ENCODE measurements at regions of chr3 and their contacts with region 1.

Region 1: DNA sequence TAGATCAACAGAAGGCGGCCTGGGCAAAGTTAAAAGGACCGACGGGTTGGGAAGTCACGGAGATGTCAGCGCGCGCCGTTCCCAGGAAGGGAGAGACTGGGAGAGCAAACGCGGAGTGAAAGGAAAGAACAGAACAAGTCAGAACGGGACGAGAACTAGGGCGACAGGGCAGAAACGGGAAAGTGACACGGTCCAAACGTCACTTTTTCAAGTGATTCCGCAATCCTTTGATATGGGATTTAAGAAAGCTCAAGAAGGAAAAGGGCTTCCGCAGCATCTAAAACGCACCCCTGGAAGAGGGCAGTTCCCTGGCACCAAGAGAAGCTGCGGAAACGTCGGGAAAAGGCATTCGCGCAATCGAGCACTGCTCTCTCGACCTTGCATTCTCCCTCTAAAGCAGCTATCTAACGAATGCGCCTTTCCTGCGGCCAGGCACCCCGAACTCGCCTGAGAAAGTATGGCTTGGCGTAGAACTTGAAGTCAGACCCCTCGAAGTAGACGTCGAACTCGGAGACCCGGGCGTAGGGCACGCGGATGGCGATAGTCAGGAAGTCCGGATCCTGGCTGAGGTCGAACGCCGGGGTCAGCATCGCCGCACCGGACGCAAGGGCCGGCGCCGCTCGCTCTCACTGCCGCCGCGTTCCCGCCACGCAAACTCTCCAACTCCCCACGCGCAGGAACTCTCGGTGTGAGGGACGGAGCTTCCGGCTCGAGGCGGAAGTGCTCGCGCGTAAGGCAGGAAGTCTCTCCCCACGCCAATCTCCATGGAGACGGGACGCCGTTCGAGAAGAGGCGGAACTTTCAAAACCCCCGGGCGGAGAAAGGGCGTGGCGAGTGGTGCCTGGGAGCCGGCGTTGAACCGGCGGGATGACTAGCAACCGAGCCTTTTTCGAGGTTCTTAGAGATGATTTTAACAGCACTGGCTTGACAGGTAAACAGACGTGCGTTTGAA is at the start of gene SHQ1:
- DNase-seq: peak; percentile 84 to 92
- ATAC-seq: peak; percentile 98
- H3K4me3 ChIP-seq: peak within 1 kb of the TSS; percentile 80
- H3K27ac ChIP-seq: peak within 1 kb of the TSS; percentile 74 to 91
- H3K4me1 ChIP-seq: peaks cover 31% of the 10 kb centered on the region
- CTCF ChIP-seq: no peak
- EP300 ChIP-seq: no peak
- POLR2A ChIP-seq: peak; percentile 88
- RAD21 ChIP-seq: no peak
- polyA plus RNA-seq, gene SHQ1: 19.5 and 22.2 TPM in 2 replicates

Region 2: GRCh38 chr3:72862314-72863090 is 14.5 kb after region 1 on chr3:
- CTCF ChIA-PET with region 1: interaction called, 17 read pairs
- POLR2A ChIA-PET with region 1: no interaction called
- DNase-seq: no peak
- ATAC-seq: no peak
- H3K4me3 ChIP-seq: no peak overlapping the region
- H3K27ac ChIP-seq: no peak overlapping the region
- H3K4me1 ChIP-seq: no peaks in the 10 kb centered on the region
- CTCF ChIP-seq: no peak
- EP300 ChIP-seq: no peak
- POLR2A ChIP-seq: no peak
- RAD21 ChIP-seq: no peak

Region 3: DNA sequence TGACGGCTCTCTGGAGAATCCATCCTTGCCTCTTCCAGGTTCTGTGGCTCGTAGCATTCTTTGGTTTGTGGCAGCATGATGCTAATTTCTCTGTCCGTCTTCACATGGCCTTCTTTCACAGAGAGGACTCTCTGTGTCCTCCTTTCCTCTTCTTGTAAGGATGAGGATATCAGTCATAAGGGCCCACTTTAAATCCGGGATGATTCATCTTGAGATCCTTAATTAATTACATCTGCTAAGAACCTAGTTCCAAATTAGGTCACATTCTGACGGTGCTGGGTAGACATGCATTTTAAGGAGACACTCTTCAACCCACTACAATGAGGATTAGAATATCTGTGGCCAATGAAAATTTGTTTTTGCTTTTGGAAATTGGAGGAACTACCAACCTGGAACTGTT is 24.2 kb after region 1 on chr3:
- CTCF ChIA-PET with region 1: interaction called, 20 read pairs
- POLR2A ChIA-PET with region 1: no interaction called
- DNase-seq: no peak
- ATAC-seq: no peak
- H3K4me3 ChIP-seq: no peak overlapping the region
- H3K27ac ChIP-seq: no peak overlapping the region
- H3K4me1 ChIP-seq: no peaks in the 10 kb centered on the region
- CTCF ChIP-seq: no peak
- EP300 ChIP-seq: no peak
- POLR2A ChIP-seq: no peak
- RAD21 ChIP-seq: no peak

Region 4: GRCh38 chr3:72887705-72888545 is 39.9 kb after region 1 on chr3 and contains the start of gene GXYLT2:
- CTCF ChIA-PET with region 1: interaction called, 22 read pairs
- POLR2A ChIA-PET with region 1: interaction called, 4 read pairs
- DNase-seq: peak; percentile 58 to 75
- ATAC-seq: peak; percentile 94 to 95
- H3K4me3 ChIP-seq: peak within 1 kb of the TSS; percentile 71
- H3K27ac ChIP-seq: peak within 1 kb of the TSS; percentile 76 to 96
- H3K4me1 ChIP-seq: peaks cover 29% of the 10 kb centered on the region
- CTCF ChIP-seq: peak; percentile 51
- EP300 ChIP-seq: no peak
- POLR2A ChIP-seq: peak; percentile 46
- RAD21 ChIP-seq: no peak
- polyA plus RNA-seq, gene GXYLT2: 3.2 and 3.3 TPM in 2 replicates

Region 5: GRCh38 chr3:73086071-73086494 is 238.1 kb after region 1 on chr3:
- CTCF ChIA-PET with region 1: interaction called, 117 read pairs
- POLR2A ChIA-PET with region 1: no interaction called
- DNase-seq: peak; percentile 28 to 42
- ATAC-seq: peak; percentile 71 to 85; a peak in 5 of 6 replicates
- H3K4me3 ChIP-seq: no peak overlapping the region
- H3K27ac ChIP-seq: no peak overlapping the region
- H3K4me1 ChIP-seq: no peaks in the 10 kb centered on the region
- CTCF ChIP-seq: peak; percentile 94
- EP300 ChIP-seq: no peak
- POLR2A ChIP-seq: no peak
- RAD21 ChIP-seq: peak; percentile 94 to 95

Region 6: DNA sequence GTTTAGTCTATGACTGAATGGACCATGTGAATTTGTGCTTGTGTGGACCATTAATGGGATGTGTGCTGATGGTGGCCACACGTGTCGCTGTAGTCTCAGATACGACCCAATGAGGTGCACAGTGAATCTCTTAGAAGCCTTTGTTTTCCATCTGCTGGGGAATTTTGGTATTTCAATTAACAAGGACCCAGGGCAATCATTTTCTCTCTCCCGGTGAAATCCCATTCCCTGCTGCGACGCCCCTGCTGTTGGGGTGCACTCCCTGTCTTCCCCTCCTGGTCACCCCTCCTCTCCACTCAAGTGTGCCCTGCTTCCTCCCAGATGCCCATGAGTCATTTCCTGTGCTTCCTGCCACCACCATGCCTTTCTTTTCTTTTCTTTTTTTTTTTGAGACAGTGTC is 246.1 kb after region 1 on chr3:
- CTCF ChIA-PET with region 1: interaction called, 117 read pairs
- POLR2A ChIA-PET with region 1: no interaction called
- DNase-seq: peak; percentile 24 to 58
- ATAC-seq: peak; percentile 71 to 85
- H3K4me3 ChIP-seq: no peak overlapping the region
- H3K27ac ChIP-seq: no peak overlapping the region
- H3K4me1 ChIP-seq: no peaks in the 10 kb centered on the region
- CTCF ChIP-seq: no peak
- EP300 ChIP-seq: no peak
- POLR2A ChIP-seq: no peak
- RAD21 ChIP-seq: no peak